Activated CD8-positive, alpha-beta T cell treated with anti-CD3 and anti-CD28 coated beads for 36 hours (primary cell): ENCODE measurements at regions of chr14 and their contacts with region 1.

Region 1: DNA sequence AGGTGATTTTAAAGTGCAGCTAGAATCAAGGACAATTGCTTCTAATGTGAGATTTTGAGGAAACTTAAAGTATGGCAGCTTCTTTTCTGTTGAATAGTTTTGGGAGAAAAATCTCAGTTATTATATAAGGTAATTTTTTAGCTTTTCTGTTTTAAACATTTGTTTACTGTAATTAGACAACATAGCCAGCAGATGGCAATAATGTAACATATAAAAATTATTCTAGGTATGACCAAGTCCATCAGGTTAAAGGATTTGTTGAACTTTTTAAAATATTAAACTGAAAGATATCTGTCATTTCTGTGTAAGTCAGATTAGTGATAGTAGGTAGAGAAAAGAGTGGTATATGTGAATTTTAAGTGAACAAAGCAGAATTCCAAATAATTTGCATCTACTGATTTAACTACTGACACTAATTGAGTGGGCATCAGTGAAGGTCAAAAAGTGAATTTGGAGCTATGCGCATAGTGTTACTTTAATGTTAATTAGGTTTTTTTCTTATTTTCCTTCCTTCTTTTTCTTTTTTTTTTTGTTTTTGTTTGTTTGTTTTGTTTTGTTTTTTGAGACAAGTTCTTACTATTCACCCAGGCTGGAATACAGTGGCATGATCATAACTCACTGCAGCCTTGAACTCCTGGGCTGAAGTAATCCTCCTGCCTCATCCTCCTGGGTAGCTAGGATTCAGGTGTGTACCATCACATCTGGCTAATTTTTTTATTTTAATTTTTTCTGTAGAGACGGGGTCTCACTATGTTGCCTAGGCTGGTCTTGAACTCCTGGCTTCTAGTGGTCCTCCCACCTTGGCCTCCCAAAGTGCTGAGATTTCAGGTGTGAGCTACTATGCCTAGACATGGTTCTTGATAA is 18.6 kb downstream of the PRORP start:
- DNase-seq: no peak
- ATAC-seq: peak; percentile 37
- H3K4me3 Mint-ChIP-seq: no peak overlapping the region
- H3K27ac Mint-ChIP-seq: no peak overlapping the region
- H3K4me1 Mint-ChIP-seq: peaks cover 13% of the 10 kb centered on the region
- H3K27me3 Mint-ChIP-seq: no peaks in the 10 kb centered on the region
- CTCF ChIP-seq: peak; percentile 61

Region 2: GRCh38 chr14:34875031-34875922 is 265.7 kb before region 1 on chr14 and contains the start of gene BAZ1A:
- CTCF ChIA-PET with region 1: no interaction called
- POLR2A ChIA-PET with region 1: no interaction called
- intact Hi-C with region 1: no loop called
- DNase-seq: peak; percentile 40
- ATAC-seq: no peak
- H3K4me3 Mint-ChIP-seq: peak within 1 kb of the TSS; percentile 100
- H3K27ac Mint-ChIP-seq: peak within 1 kb of the TSS; percentile 100
- H3K4me1 Mint-ChIP-seq: peaks cover 29% of the 10 kb centered on the region
- H3K27me3 Mint-ChIP-seq: no peaks in the 10 kb centered on the region
- CTCF ChIP-seq: no peak
- total RNA-seq, gene BAZ1A: 47.4 to 49.4 TPM

Region 3: DNA sequence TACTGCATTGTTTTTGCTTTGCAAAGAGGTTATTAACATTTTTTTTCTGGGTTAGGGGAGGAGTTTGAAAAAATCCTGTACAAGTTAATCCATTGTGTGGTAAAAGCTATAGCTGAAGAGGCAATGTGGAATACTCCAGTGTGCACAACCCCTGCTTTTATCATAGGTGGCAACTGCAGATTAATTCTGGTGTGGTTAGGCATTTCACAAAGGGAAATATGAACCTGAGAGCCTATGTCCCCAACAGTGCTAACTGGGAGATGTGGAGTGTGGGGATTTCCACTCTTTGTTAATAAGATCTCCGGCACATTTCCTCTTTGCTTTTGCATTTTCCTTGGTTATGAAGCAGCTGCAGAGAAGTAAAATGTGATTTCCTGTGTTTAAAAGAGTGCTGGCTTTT is 15.0 kb after region 1 on chr14:
- CTCF ChIA-PET with region 1: interaction called, 18 read pairs
- POLR2A ChIA-PET with region 1: interaction called, 3 read pairs
- intact Hi-C with region 1: no loop called
- DNase-seq: no peak
- ATAC-seq: no peak
- H3K4me3 Mint-ChIP-seq: no peak overlapping the region
- H3K27ac Mint-ChIP-seq: peak overlapping the region; percentile 58
- H3K4me1 Mint-ChIP-seq: peaks cover 35% of the 10 kb centered on the region
- H3K27me3 Mint-ChIP-seq: no peaks in the 10 kb centered on the region
- CTCF ChIP-seq: no peak

Region 4: GRCh38 chr14:35201066-35201465 is 60.1 kb after region 1 on chr14:
- CTCF ChIA-PET with region 1: no interaction called
- POLR2A ChIA-PET with region 1: no interaction called
- intact Hi-C with region 1: loop called (anchors 10 kb)
- DNase-seq: peak; percentile 36
- ATAC-seq: peak; percentile 51
- H3K4me3 Mint-ChIP-seq: no peak overlapping the region
- H3K27ac Mint-ChIP-seq: peak overlapping the region; percentile 85
- H3K4me1 Mint-ChIP-seq: peaks cover 45% of the 10 kb centered on the region
- H3K27me3 Mint-ChIP-seq: no peaks in the 10 kb centered on the region
- CTCF ChIP-seq: no peak

Region 5: GRCh38 chr14:35301735-35302528 is 161.0 kb after region 1 on chr14:
- CTCF ChIA-PET with region 1: interaction called, 9 read pairs
- POLR2A ChIA-PET with region 1: no interaction called
- intact Hi-C with region 1: loop called (anchors 5 kb)
- DNase-seq: no peak
- ATAC-seq: peak; percentile 63
- H3K4me3 Mint-ChIP-seq: peak overlapping the region; percentile 24
- H3K27ac Mint-ChIP-seq: peak overlapping the region; percentile 77
- H3K4me1 Mint-ChIP-seq: peaks cover 55% of the 10 kb centered on the region
- H3K27me3 Mint-ChIP-seq: no peaks in the 10 kb centered on the region
- CTCF ChIP-seq: no peak